ENCODE measurements at regions of chr21 and their contacts with region 1.

Region 1: GRCh38 chr21:40129809-40130208 is 262.6 kb downstream of the PCP4 start:
- DNase-seq: no peak
- H3K4me3 ChIP-seq: no peak overlapping the region
- H3K27ac ChIP-seq: no peak overlapping the region
- H3K4me1 ChIP-seq: no peaks in the 10 kb centered on the region
- H3K27me3 ChIP-seq: no peaks in the 10 kb centered on the region
- CTCF ChIP-seq: no peak
- POLR2A ChIP-seq: no peak

Region 2: GRCh38 chr21:39863111-39863510 is 266.7 kb before region 1 on chr21:
- intact Hi-C with region 1: loop called (anchors 5 kb)
- DNase-seq: no peak
- H3K4me3 ChIP-seq: no peak overlapping the region
- H3K27ac ChIP-seq: no peak overlapping the region
- H3K4me1 ChIP-seq: no peaks in the 10 kb centered on the region
- H3K27me3 ChIP-seq: no peaks in the 10 kb centered on the region
- CTCF ChIP-seq: no peak
- POLR2A ChIP-seq: no peak

Measured in vagina (tissue), 2 donors.